Stomach (tissue), 19 donors: ENCODE measurements at regions of chr18 and their contacts with region 1.

Region 1: DNA sequence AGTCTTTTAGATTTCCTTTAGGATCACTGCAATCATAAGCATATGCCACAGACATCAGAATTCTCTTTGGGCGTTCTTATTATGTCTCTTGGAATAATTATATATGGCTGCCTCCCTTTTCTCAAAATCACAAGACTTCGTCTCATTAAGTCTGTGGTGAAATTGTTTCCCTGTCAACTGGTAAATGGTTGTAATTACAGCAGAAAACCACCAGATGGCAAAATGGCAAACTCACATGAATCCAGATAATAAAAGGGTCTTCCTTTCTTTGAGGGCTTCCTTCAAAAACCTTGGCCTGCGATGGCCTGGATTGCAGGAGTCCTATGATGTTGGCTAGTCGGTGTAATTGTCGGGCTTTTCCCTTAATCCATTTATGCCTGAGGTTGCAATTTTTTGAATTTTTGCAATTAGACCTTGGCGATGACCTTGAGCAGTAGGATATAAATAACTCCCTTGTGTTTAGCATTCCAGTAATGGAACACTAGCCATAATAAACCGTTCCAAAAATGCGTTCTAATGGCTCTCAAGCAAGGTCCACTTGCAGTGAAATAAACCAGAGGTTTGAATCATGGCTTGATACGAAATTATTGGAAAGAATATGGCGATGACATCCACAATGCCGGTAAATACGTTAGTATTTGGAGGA is 656.4 kb downstream of the MBD2 start:
- DNase-seq: peak in 1 of 2 donors; percentile 46
- H3K4me3 ChIP-seq: no peak overlapping the region
- H3K27ac ChIP-seq: no peak overlapping the region
- H3K4me1 ChIP-seq: peaks cover 0 to 15% (median 7%) of the 10 kb centered on the region in 4 donors
- H3K27me3 ChIP-seq: no peaks in the 10 kb centered on the region
- CTCF ChIP-seq: peak in 4 of 7 experiments; percentile 27 to 59 (median 50)
- EP300 ChIP-seq: no peak
- POLR2A ChIP-seq: no peak

Region 2: DNA sequence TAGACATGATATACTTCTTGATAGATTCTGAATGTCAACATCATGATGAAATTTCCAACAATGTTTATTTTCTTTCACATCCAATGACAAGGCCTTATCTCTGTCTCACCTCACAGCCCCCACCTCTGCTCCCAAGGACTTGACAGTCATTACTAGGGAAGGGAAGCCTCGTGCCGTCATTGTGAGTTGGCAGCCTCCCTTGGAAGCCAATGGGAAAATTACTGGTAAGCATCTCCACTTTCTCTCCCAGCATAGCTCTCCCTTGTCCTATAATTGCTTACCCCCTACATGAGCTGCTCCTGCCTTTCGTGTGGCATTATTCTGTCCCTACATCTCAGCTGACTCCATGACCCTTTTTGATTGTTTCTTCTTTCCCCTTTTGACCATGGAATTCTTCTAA is 165.4 kb before region 1 on chr18:
- intact Hi-C with region 1: no loop called
- DNase-seq: no peak
- H3K4me3 ChIP-seq: no peak overlapping the region
- H3K27ac ChIP-seq: no peak overlapping the region
- H3K4me1 ChIP-seq: no peaks in the 10 kb centered on the region
- H3K27me3 ChIP-seq: no peaks in the 10 kb centered on the region
- CTCF ChIP-seq: no peak
- EP300 ChIP-seq: no peak
- POLR2A ChIP-seq: no peak

Region 3: GRCh38 chr18:53503914-53504441 is 64.1 kb before region 1 on chr18:
- intact Hi-C with region 1: loop called (anchors 10 kb)
- DNase-seq: no peak
- H3K4me3 ChIP-seq: no peak overlapping the region
- H3K27ac ChIP-seq: no peak overlapping the region
- H3K4me1 ChIP-seq: no peaks in the 10 kb centered on the region
- H3K27me3 ChIP-seq: no peaks in the 10 kb centered on the region
- CTCF ChIP-seq: no peak
- EP300 ChIP-seq: no peak
- POLR2A ChIP-seq: no peak

Region 4: DNA sequence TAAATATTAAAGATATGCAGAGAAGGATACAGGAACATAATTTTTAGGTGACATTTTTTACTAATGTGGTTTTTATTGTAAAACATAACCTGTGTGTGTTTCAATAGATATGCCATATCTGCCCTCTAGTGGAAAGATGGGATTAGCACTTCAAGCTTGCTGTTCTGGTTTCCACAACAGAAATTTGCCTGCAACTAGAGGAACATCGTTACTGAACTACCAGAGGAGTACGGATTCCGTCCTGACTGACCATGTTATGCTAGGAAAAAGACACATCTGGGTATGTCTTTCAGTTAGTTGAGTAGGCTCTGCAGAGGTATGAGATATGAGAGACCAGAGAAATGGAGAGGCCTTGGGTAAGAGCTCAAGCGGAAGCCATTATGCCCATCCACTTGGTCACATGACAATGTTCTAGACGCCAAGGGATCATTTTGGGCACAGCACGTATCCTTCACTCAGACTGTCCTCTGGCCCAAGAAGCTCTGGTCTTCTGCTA is 551.5 kb after region 1 on chr18:
- intact Hi-C with region 1: loop called (anchors 10 kb)
- DNase-seq: peak in 1 of 2 donors; percentile 81
- H3K4me3 ChIP-seq: no peak overlapping the region
- H3K27ac ChIP-seq: no peak overlapping the region
- H3K4me1 ChIP-seq: peaks cover 0 to 7% (median 5%) of the 10 kb centered on the region in 4 donors
- H3K27me3 ChIP-seq: no peaks in the 10 kb centered on the region
- CTCF ChIP-seq: peak in 5 of 7 experiments; percentile 59 to 70 (median 68)
- EP300 ChIP-seq: no peak
- POLR2A ChIP-seq: no peak